ENCODE measurements at regions of chr9 and their contacts with region 1.

Region 1: DNA sequence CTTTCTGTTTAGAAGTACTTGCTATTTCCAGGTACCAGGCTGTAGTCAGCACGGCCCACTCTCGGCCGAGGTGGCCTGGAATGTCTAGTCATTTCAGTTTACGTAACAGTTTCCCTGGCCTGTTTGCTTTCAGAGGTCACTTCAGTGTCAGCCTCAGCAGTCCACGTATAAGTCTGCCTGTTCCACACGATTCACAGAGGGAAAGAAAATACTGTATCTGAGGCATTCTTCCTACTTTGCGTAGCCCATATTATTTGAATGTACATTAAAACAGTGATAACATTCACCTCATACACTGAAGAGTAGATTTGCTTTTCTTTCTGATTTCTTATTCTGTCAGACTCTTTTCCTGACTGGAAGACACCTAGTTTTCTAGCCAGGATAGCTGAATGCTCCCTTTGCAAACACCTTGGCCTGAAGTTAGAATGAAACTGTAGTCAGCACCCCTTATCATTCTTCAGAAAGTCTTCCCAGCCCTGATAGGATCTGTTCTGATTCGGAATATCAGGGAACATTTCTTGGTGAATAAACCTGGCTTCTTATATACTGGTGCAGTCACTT is 140.9 kb downstream of the AOPEP start:
- DNase-seq: peak; percentile 78 to 93
- H3K4me3 ChIP-seq: peak overlapping the region; percentile 34; the same call in 1 of the 2 replicates
- H3K27ac ChIP-seq: peak overlapping the region; percentile 100
- H3K4me1 ChIP-seq: peaks cover 82% of the 10 kb centered on the region
- H3K27me3 ChIP-seq: no peaks in the 10 kb centered on the region
- CTCF ChIP-seq: no peak

Region 2: DNA sequence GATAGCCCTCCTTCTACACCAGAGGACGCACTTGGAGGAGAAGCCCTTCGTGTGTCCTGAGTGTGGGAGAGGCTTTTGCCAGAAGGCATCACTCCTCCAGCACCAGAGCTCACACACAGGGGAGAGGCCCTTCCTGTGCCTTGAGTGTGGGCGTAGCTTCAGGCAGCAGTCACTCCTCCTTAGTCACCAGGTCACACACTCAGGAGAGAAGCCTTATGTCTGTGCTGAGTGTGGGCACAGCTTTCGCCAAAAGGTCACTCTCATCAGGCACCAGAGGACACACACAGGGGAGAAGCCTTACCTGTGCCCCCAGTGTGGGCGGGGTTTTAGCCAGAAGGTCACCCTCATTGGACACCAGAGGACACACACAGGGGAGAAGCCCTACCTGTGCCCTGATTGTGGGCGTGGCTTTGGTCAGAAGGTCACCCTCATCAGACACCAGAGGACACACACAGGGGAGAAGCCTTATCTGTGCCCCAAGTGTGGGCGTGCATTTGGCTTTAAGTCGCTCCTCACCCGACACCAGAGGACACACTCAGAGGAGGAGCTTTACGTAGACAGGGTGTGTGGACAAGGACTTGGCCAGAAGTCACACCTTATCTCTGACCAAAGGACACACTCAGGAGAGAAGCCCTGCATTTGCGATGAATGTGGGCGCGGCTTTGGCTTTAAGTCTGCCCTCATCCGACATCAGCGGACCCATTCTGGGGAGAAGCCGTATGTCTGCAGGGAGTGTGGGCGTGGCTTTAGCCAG is 566.6 kb before region 1 on chr9:
- CTCF ChIA-PET with region 1: no interaction called
- POLR2A ChIA-PET with region 1: no interaction called
- intact Hi-C with region 1: no loop called
- DNase-seq: no peak
- H3K4me3 ChIP-seq: no peak overlapping the region
- H3K27ac ChIP-seq: no peak overlapping the region
- H3K4me1 ChIP-seq: no peaks in the 10 kb centered on the region
- H3K27me3 ChIP-seq: no peaks in the 10 kb centered on the region
- CTCF ChIP-seq: no peak

Region 3: GRCh38 chr9:94672811-94673487 is 194.4 kb before region 1 on chr9:
- CTCF ChIA-PET with region 1: interaction called, 4 read pairs
- POLR2A ChIA-PET with region 1: no interaction called
- intact Hi-C with region 1: loop called (anchors 1 kb)
- DNase-seq: peak in 1 of 2 experiments; percentile 85
- H3K4me3 ChIP-seq: no peak overlapping the region; the same call in 1 of the 2 replicates
- H3K27ac ChIP-seq: peak overlapping the region; percentile 61
- H3K4me1 ChIP-seq: peaks cover 19% of the 10 kb centered on the region
- H3K27me3 ChIP-seq: no peaks in the 10 kb centered on the region
- CTCF ChIP-seq: no peak

Region 4: DNA sequence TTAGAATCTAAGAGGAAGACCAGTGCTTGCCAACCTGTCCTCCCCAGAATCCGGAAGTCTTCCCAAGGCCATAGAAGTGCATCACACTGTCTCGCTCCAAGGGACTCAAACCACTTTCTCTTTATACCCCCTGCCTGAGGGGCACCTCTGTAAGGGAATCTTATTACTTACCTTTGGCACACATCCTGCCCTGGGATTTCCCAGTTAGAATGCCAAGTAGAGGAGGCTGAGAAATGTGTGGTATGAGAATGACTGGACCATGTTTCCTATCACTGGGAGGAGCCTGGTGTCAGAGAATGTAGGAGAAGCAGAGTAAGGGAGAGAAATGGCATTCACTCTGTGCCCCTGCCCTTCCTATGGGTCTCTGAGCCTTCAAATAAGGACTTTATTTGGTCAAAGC is 55.0 kb before region 1 on chr9:
- CTCF ChIA-PET with region 1: no interaction called
- POLR2A ChIA-PET with region 1: interaction called, 8 read pairs
- intact Hi-C with region 1: loop called (anchors 1 kb)
- DNase-seq: peak; percentile 75 to 91
- H3K4me3 ChIP-seq: no peak overlapping the region
- H3K27ac ChIP-seq: peak overlapping the region; percentile 67
- H3K4me1 ChIP-seq: peaks cover 80% of the 10 kb centered on the region
- H3K27me3 ChIP-seq: no peaks in the 10 kb centered on the region
- CTCF ChIP-seq: no peak

Region 5: DNA sequence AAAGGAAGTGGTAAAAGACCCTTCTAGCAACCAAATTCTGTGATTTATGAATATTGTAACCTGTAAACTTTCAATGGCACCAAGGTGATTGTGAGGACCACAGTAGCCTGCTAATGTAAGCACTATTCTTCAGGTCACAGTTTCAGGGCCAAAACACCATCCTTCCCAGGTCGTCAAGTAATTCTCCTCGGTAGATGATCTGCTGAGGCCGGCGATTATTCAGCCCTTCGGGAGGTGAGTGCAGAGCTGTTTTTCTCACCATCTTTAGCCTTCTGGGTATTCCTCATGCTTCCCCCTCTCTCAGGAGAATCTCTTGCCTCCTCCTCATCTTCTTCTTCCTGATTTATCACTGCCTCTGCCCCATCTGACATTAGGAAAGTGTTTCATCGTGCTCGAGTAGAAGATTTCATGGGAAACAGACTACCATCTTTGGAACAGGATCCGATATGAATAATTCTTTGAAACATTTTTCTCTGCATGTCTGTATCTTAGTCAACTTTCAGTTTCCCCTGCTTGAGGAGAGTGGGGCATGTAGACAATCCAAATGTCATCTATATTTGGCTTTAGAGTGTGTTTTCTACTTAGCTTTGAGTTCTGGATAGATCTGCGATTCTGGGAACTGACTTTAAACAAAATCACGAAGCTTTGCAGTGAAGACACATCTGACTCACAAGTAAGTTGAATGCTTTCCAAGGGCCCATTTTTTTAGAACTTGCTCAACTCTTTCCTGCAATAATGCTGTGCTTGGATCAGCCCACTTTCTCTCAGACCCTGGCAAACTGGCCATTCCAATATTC is 33.1 kb after region 1 on chr9:
- CTCF ChIA-PET with region 1: interaction called, 6 read pairs
- POLR2A ChIA-PET with region 1: interaction called, 3 read pairs
- intact Hi-C with region 1: loop called (anchors 2 kb)
- DNase-seq: peak in 1 of 2 experiments; percentile 85
- H3K4me3 ChIP-seq: no peak overlapping the region; the same call in 1 of the 2 replicates
- H3K27ac ChIP-seq: peak overlapping the region; percentile 83
- H3K4me1 ChIP-seq: peaks cover 55% of the 10 kb centered on the region
- H3K27me3 ChIP-seq: no peaks in the 10 kb centered on the region
- CTCF ChIP-seq: no peak

Region 6: DNA sequence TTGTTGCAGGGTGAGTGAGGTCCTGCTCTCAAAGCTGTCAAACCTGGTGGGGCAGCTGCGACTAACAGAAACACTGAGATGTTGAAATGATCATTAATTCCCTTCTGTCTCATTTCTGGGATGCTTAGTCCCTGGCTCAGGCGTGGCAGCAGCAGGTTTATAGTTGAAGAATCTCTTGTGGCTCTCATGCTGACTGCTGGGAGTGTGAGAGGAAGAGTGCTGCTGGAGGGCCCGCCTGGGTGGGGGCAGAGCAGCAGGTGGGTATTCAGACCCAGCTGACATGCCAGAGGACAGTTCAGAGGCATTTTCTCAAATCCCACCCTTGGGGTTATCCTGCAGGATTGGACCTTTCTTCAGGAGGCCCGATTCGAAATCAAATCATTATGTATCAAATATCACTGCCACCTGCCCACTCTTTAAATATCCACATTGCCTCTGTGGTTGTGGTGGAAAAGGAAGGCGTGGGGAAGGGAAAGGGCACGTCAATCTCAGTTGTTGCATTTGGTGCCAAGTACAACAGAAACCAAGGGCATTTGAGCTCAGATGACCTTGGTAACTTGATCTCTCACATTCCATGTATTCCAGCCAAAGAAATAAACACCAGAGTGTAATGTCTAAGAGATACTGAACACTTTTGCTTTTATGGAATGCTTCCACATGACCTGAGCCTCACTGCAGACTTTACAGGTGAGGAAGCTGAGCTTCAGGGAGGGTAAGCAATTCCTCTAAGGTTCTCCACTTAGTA is 83.4 kb after region 1 on chr9:
- CTCF ChIA-PET with region 1: no interaction called
- POLR2A ChIA-PET with region 1: interaction called, 5 read pairs
- intact Hi-C with region 1: loop called (anchors 1 kb)
- DNase-seq: peak; percentile 89 to 100
- H3K4me3 ChIP-seq: peak overlapping the region; percentile 5; the same call in 1 of the 2 replicates
- H3K27ac ChIP-seq: peak overlapping the region; percentile 91
- H3K4me1 ChIP-seq: peaks cover 85% of the 10 kb centered on the region
- H3K27me3 ChIP-seq: no peaks in the 10 kb centered on the region
- CTCF ChIP-seq: no peak

Region 7: DNA sequence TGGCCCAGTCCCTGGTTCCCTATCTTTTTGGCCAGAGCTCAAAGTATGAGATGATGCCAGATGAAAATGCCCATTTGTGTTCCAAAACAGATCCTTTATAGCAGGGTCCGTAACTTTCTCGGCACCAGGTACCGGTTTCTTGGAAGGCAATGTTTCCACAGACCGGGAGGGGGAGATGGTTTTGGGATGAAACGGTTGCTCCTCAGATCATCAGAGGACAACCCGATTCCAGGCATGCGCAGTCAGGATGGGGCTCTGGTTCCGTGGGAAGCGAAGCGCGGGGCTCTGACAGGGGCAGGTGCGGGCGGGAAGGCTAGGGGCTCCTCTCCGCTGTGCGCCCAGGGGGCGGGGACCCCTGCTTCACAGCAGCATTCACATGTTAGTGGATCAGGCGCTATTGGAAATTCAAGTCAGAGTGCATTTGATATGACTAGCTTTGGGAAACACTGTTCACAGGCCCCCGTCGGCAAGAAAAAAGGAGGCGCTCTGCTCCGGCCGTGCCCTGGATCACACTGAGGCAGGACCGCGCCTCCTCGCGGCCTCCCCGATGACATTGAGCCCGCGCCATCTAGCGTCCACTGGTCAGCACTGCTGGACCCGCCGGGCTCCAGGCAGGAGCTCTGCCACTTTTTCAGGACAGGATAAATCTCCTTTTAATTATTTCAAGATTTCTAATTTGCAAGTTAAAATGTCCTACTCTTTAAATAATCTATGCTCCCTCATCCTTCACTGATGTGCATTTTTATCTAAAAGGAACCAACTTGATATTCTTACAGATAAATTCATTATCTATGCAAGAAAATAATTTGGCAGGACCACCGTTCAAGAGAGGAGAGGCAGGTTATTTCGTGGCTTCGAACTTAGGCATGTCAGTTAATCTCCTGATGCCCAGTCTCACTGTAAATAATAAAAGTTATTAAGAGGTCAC is 260.2 kb after region 1 on chr9:
- CTCF ChIA-PET with region 1: no interaction called
- POLR2A ChIA-PET with region 1: interaction called, 11 read pairs
- intact Hi-C with region 1: no loop called
- DNase-seq: peak; percentile 43 to 83
- H3K4me3 ChIP-seq: no peak overlapping the region
- H3K27ac ChIP-seq: no peak overlapping the region
- H3K4me1 ChIP-seq: no peaks in the 10 kb centered on the region
- H3K27me3 ChIP-seq: no peaks in the 10 kb centered on the region
- CTCF ChIP-seq: peak; percentile 89

Measured in PC-9 (cell line).